Uterus (tissue), 4 donors: ENCODE measurements at regions of chr16 and their contacts with region 1.

Region 1: GRCh38 chr16:27242868-27243590 is 25.5 kb downstream of the NSMCE1 start:
- DNase-seq: peak; percentile 42 to 59
- H3K4me3 ChIP-seq: peak overlapping the region in 1 of 2 donors; percentile 18
- H3K27ac ChIP-seq: peak overlapping the region; percentile 82 to 87
- H3K4me1 ChIP-seq: peaks cover 6 to 25% of the 10 kb centered on the region in 2 donors
- H3K27me3 ChIP-seq: no peaks in the 10 kb centered on the region
- CTCF ChIP-seq: no peak
- POLR2A ChIP-seq: no peak

Region 2: DNA sequence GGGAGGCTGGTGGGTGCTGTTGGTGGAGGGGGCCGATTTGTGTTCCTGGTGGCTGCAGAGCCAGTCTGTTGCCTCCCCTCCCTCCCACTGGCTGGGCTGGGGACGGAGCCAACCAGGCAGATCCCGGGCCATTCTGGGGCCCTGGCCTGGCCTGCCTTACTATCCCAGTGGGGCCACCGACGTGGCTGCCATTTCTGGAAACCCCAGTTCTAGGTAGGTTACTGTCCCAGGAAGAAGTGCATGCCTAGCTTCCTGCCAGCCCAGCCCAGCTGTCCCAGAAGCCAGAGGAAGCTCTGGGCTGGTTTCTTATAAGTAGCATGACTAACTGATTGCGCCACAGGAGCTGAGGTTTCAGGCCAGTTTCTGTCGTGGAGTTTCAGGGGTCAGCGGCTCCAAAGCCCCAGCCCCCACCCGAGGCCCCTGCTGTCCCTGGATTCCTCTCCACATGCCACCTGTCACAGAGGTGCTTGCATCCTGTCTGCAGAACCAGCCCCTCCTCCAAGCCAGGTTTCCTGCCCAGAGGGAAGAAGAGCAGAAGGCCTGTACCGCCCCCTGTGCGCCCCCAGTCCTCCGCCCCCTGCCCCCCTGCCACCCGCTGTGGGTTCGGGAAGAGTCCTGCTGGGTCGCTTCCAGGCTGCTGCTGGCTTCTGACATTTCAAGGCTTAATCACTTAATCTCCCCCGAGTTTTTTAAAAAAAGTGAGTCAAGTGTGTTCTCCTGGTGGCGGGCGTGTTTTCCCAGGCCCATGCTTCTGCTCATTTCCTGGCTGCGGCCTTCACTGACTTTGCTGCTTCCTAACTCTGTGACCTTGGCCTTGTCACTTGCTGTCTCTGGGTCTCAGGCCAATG is 83.9 kb after region 1 on chr16:
- intact Hi-C with region 1: loop called (anchors 10 kb)
- DNase-seq: peak; percentile 87 to 94
- H3K4me3 ChIP-seq: peak overlapping the region in 1 of 2 donors; percentile 12
- H3K27ac ChIP-seq: peak overlapping the region; percentile 97 to 98
- H3K4me1 ChIP-seq: peaks cover 16 to 29% of the 10 kb centered on the region in 2 donors
- H3K27me3 ChIP-seq: no peaks in the 10 kb centered on the region
- CTCF ChIP-seq: peak in 2 of 4 experiments; percentile 14 to 26
- POLR2A ChIP-seq: no peak